Adrenal gland (tissue), 19 donors: ENCODE measurements at regions of chr20 and their contacts with region 1.

Region 1: DNA sequence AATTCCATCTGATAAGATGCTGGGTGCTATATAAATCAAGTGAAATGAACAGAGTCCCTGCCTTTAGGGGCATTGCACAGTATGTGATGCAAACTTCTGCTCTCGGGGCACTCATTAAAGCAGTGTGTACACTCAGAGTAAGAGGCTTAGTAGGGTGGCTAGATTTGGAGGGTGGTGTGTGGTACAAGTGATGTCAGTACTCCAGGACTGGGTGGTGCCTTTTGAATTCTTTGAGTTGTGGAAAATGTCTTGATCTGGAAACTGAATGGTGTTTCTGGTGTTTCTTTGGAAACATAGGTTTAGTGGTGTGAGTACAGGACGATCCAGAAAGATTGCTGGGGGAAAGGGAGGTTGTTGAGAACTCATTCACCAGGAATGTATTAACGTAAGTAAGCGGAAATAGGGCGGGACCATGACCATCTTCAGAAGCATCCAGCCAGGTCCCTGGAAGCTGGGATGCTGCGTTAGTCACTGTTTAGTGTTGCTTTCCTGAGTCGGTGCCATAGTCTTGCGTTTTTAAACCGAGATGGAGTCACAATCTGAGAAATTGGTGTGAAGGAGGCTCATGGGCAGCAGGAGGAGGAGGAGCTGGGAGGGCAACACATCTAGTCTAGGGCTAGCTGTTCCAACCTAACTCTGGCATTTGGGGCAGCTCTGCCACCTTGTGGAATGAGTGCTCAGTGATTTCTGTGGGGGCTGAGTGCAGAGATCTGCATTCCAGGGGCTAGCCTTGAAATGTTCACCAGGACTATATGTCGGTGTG is 70.3 kb downstream of the SCAND1 start:
- DNase-seq: peak; percentile 72 to 89 (median 81)
- H3K4me3 ChIP-seq: no peak overlapping the region
- H3K27ac ChIP-seq: peak overlapping the region in 4 of 5 donors; percentile 1 to 92 (median 52)
- H3K4me1 ChIP-seq: peaks cover 0 to 16% of the 10 kb centered on the region in 2 donors
- H3K27me3 ChIP-seq: no peaks in the 10 kb centered on the region
- CTCF ChIP-seq: peak; percentile 71 to 86 (median 80)
- POLR2A ChIP-seq: no peak

Region 2: GRCh38 chr20:35726759-35727711 is 156.9 kb before region 1 on chr20:
- intact Hi-C with region 1: loop called (anchors 10 kb)
- DNase-seq: no peak
- H3K4me3 ChIP-seq: no peak overlapping the region
- H3K27ac ChIP-seq: no peak overlapping the region
- H3K4me1 ChIP-seq: peaks cover 13 to 38% of the 10 kb centered on the region in 2 donors
- H3K27me3 ChIP-seq: no peaks in the 10 kb centered on the region
- CTCF ChIP-seq: no peak
- POLR2A ChIP-seq: no peak

Region 3: GRCh38 chr20:35821807-35822242 is 62.1 kb before region 1 on chr20:
- intact Hi-C with region 1: no loop called
- DNase-seq: no peak
- H3K4me3 ChIP-seq: no peak overlapping the region
- H3K27ac ChIP-seq: peak overlapping the region in 3 of 5 donors; percentile 3 to 52 (median 17)
- H3K4me1 ChIP-seq: peaks cover 12 to 35% of the 10 kb centered on the region in 2 donors
- H3K27me3 ChIP-seq: no peaks in the 10 kb centered on the region
- CTCF ChIP-seq: no peak
- POLR2A ChIP-seq: no peak

Region 4: GRCh38 chr20:36010825-36011224 is 126.9 kb after region 1 on chr20:
- intact Hi-C with region 1: no loop called
- DNase-seq: no peak
- H3K4me3 ChIP-seq: no peak overlapping the region
- H3K27ac ChIP-seq: no peak overlapping the region
- H3K4me1 ChIP-seq: no peaks in the 10 kb centered on the region
- H3K27me3 ChIP-seq: no peaks in the 10 kb centered on the region
- CTCF ChIP-seq: no peak
- POLR2A ChIP-seq: no peak